ENCODE measurements at regions of chr6 and their contacts with region 1.

Region 1: DNA sequence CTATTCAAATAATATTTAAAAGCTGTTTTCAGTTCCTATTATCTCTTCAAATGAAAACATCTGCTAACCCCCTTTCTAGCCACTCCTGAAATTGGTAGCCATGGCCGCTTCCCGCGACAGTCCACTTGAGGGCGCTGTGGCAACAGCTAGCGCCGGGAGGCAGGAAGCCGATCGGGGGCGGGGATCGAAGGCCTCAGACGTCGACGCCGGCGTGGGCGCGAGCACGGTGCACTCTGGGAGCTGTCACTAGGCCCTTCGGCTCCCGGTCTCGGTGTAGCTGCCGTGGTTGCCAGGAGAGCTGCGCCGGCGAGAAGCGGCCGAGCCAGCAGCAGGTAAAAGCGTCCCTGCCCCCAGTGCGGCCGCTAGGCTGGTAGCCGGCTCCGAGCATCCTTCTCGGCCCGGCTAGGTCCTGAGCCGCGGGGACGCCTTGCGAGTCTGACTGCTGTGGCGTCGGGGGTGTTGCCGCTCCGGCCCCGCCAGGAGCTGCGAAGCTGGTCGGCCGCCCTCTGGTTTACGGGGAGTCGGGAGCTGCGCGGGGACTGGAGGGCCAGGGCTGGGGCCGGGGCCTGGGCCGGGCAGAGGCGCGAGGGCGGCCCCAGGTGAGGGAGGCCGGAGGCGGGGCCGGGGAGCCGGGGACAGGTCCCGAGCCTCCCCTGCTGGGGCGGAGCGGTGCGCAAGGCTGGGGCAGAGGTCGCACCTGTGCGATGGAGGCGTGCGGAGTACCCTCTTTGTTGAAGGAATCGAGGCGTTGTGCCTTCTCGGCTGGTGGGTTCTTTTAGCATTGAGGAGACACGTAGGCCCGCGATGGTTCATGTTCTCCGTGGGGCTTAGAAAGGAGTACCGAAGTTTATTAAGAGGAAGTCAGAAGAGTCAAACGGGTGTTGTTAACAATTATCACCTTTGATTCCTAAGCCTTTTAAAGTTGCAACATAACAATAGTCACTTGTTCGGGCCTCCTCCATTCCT is at the start of gene DOP1A:
- DNase-seq: peak; percentile 86
- ATAC-seq: peak; percentile 88
- H3K4me3 ChIP-seq: peak within 1 kb of the TSS; percentile 68 to 75
- H3K27ac ChIP-seq: peak within 1 kb of the TSS; percentile 73
- H3K4me1 ChIP-seq: peaks cover 2 to 23% of the 10 kb centered on the region in 2 experiments; a peak in 3 of 4 replicates
- H3K27me3 ChIP-seq: no peaks in the 10 kb centered on the region
- CTCF ChIP-seq: peak; percentile 92 to 95 (median 94)
- POLR2A ChIP-seq: peak; percentile 34
- RAD21 ChIP-seq: peak; percentile 98
- total RNA-seq, gene DOP1A: 7.1 TPM

Region 2: GRCh38 chr6:82257088-82257772 is 810.5 kb before region 1 on chr6:
- CTCF ChIA-PET with region 1: interaction called, 11 read pairs
- POLR2A ChIA-PET with region 1: no interaction called
- RAD21 ChIA-PET with region 1: no interaction called
- intact Hi-C with region 1: no loop called
- DNase-seq: no peak
- ATAC-seq: no peak
- H3K4me3 ChIP-seq: no peak overlapping the region
- H3K27ac ChIP-seq: no peak overlapping the region
- H3K4me1 ChIP-seq: peaks cover 24 to 26% of the 10 kb centered on the region in 2 experiments
- H3K27me3 ChIP-seq: no peaks in the 10 kb centered on the region
- CTCF ChIP-seq: peak in 2 of 3 experiments; percentile 16 to 24; a peak in 1 of 6 replicates
- POLR2A ChIP-seq: no peak
- RAD21 ChIP-seq: peak; percentile 50

Region 3: GRCh38 chr6:83215131-83216047 is 147.7 kb after region 1 on chr6:
- CTCF ChIA-PET with region 1: interaction called, 82 read pairs
- POLR2A ChIA-PET with region 1: interaction called, 5 read pairs
- RAD21 ChIA-PET with region 1: interaction called, 4 to 6 read pairs
- intact Hi-C with region 1: loop called (anchors 1 kb)
- DNase-seq: peak; percentile 38
- ATAC-seq: peak; percentile 97
- H3K4me3 ChIP-seq: no peak overlapping the region
- H3K27ac ChIP-seq: no peak overlapping the region
- H3K4me1 ChIP-seq: no peaks in the 10 kb centered on the region
- H3K27me3 ChIP-seq: no peaks in the 10 kb centered on the region
- CTCF ChIP-seq: peak; percentile 78 to 89 (median 83)
- POLR2A ChIP-seq: no peak
- RAD21 ChIP-seq: peak; percentile 80

Region 4: GRCh38 chr6:83429857-83430610 is 362.3 kb after region 1 on chr6:
- CTCF ChIA-PET with region 1: no interaction called
- POLR2A ChIA-PET with region 1: no interaction called
- RAD21 ChIA-PET with region 1: no interaction called
- intact Hi-C with region 1: loop called (anchors 10 kb)
- DNase-seq: peak; percentile 46
- ATAC-seq: peak; percentile 46
- H3K4me3 ChIP-seq: peak overlapping the region; percentile 67 to 90
- H3K27ac ChIP-seq: peak overlapping the region; percentile 97
- H3K4me1 ChIP-seq: peaks cover 24 to 26% of the 10 kb centered on the region in 2 experiments
- H3K27me3 ChIP-seq: no peaks in the 10 kb centered on the region
- CTCF ChIP-seq: no peak
- POLR2A ChIP-seq: no peak
- RAD21 ChIP-seq: no peak

Region 5: DNA sequence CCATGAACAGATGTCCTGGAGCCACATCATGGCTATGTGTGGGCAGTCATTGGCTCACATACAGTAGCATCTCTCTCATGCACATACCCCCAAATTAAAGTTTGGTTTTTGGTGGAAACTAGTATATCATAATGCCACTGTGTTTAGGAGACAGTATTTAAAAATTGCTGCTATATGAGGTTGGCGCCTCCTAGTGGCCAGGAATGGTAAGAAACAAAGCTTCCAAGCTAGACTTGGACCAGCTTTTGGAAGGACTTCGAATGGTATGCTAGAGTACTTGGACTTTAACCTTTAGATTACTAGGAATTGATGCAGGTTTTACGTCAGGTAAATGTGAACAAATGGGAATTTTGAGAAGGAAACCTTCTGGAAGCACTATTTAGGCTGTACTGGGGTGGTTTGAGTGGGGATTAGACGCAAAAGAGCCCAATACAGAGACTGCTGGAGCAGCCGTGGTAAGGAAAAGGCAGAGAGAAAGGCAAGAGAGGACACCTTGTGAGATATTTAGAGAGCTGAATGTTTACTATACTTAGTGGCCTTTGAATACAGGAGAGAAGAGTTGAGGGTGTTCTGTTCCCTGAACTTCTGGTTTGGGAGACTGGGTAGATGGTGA is 468.4 kb after region 1 on chr6:
- CTCF ChIA-PET with region 1: interaction called, 22 read pairs
- POLR2A ChIA-PET with region 1: no interaction called
- RAD21 ChIA-PET with region 1: no interaction called
- intact Hi-C with region 1: no loop called
- DNase-seq: peak; percentile 36
- ATAC-seq: peak; percentile 85
- H3K4me3 ChIP-seq: no peak overlapping the region
- H3K27ac ChIP-seq: no peak overlapping the region
- H3K4me1 ChIP-seq: no peaks in the 10 kb centered on the region
- H3K27me3 ChIP-seq: no peaks in the 10 kb centered on the region
- CTCF ChIP-seq: peak; percentile 32 to 98 (median 82); a peak in 5 of 6 replicates
- POLR2A ChIP-seq: no peak
- RAD21 ChIP-seq: peak; percentile 58

Measured in HCT116 (cell line).